Thyroid gland (tissue), 4 donors: ENCODE measurements at regions of chr4 and their contacts with region 1.

Region 1: DNA sequence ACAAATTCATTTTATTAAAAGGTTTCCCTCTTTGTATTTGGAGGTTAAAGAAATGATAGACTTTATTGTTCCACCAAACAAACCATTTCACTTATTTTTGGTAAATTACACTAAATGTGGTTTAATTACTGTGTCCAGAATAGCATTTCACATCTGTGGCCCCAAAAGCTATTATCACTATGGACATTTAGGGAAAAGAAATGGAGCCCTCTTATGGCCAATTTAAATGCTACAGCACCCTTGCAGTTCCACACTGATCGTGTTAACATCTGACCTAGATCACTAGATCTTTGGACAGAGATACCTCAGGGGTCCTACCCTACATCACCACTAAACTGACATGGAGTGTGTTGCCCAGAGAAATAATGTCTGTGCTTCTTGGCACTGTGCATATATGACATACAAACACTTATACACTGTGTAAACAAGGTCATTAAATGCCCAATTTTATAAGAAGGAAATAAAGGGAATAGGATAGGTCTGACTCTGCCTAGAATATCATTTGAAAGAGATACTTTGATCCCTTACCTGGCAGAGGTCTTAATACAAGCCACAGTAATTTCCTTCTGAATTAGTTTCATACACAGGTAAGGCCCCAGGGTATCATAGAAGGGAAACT is 163.9 kb downstream of the KDR start:
- DNase-seq: no peak
- H3K4me3 ChIP-seq: no peak overlapping the region
- H3K27ac ChIP-seq: no peak overlapping the region
- H3K4me1 ChIP-seq: no peaks in the 10 kb centered on the region
- H3K27me3 ChIP-seq: no peaks in the 10 kb centered on the region
- CTCF ChIP-seq: peak in 5 of 6 experiments; percentile 16 to 82 (median 71)
- POLR2A ChIP-seq: no peak

Region 2: GRCh38 chr4:54322818-54323417 is 638.5 kb before region 1 on chr4:
- intact Hi-C with region 1: loop called (anchors 5 kb)
- DNase-seq: peak; percentile 72 to 80
- H3K4me3 ChIP-seq: no peak overlapping the region
- H3K27ac ChIP-seq: no peak overlapping the region
- H3K4me1 ChIP-seq: no peaks in the 10 kb centered on the region
- H3K27me3 ChIP-seq: no peaks in the 10 kb centered on the region
- CTCF ChIP-seq: peak; percentile 39 to 74 (median 62)
- POLR2A ChIP-seq: no peak

Region 3: DNA sequence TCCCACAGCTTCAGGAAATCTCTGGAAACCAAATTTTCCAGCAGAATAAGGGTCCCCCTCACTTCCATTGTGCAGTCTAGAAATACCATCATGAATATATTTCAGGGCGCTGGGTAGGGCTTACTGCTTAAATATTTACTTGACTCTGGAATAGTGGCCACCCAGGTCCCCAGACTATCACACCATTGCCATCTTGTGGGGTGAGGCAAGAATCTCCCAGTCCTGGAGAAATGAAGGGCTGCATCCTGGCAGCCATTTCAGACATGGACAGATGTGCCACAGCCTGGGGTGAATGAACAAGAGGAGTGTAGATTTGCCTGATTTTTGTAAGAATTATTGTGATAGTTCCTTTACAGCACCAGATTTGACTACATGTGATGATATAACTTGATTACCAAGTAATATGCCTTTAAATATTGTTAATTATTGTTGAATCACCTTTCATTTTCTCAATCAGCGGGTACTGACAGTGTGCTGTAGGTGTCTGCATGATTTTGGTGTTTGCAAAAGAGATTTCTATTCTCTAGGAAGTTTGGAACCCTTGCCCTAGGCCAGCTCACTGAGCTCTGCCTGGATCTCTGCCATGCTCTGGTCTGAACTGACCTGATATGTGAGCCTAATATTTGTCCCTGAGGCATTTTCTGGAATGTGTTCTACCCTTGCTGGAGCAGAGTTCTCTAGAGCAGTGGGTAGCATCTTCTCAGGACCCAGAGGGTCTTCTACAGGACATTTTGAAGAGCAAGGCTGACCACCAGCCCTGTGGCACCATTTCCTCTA is 120.3 kb before region 1 on chr4:
- intact Hi-C with region 1: loop called (anchors 10 kb)
- DNase-seq: peak in 1 of 2 donors; percentile 30
- H3K4me3 ChIP-seq: no peak overlapping the region
- H3K27ac ChIP-seq: no peak overlapping the region
- H3K4me1 ChIP-seq: peaks cover 20 to 31% of the 10 kb centered on the region in 2 donors
- H3K27me3 ChIP-seq: no peaks in the 10 kb centered on the region
- CTCF ChIP-seq: peak in 3 of 6 experiments; percentile 17 to 38 (median 34)
- POLR2A ChIP-seq: no peak

Region 4: DNA sequence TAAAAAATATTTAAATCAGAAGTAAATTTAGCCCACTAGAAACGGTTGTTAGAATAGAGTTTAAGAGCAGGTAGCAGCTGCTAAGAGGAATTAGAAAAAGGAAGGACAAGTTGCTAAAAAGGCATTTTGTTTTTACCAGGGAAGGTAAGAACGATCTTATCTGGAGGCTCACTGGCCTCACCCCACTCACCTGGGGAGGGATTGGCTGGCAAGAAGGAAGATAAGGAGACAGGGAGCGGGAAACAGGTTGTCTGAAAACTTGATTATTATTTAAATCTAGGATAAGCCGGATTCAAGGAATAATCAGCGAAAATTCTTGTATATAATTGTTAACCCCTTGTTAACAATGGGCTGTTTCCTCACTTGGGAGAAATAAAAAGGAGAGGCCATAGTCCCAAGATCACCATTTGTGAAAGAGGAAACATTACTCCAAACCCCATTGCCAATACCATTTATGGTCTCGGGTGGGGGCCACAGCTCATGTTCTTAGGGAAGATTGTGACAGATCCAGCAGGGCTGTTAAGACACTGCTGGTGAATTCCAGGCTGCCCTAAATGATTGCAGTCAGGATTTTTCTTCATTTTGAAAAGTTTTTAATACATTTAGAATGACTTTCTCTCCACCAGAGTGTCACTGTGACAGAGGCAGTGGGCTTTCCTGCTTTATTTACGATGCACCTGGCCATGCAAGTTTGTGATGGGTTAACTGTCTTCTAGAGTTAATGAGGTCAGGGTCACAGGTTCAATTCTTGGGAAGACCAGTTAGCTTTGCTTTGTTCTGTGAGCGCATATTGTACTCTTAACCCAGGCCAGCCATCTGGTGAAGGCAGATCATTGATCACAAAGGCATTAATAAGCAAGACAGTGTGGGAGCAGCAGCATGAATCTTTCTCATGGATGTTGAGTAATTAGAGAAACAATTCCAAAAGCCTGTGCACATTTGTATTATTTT is 1093.8 kb after region 1 on chr4:
- intact Hi-C with region 1: no loop called
- DNase-seq: no peak
- H3K4me3 ChIP-seq: no peak overlapping the region
- H3K27ac ChIP-seq: no peak overlapping the region
- H3K4me1 ChIP-seq: no peaks in the 10 kb centered on the region
- H3K27me3 ChIP-seq: peaks cover 2% of the 10 kb centered on the region
- CTCF ChIP-seq: no peak
- POLR2A ChIP-seq: no peak